Ovary (tissue), 10 donors: ENCODE measurements at regions of chr4 and their contacts with region 1.

Region 1: DNA sequence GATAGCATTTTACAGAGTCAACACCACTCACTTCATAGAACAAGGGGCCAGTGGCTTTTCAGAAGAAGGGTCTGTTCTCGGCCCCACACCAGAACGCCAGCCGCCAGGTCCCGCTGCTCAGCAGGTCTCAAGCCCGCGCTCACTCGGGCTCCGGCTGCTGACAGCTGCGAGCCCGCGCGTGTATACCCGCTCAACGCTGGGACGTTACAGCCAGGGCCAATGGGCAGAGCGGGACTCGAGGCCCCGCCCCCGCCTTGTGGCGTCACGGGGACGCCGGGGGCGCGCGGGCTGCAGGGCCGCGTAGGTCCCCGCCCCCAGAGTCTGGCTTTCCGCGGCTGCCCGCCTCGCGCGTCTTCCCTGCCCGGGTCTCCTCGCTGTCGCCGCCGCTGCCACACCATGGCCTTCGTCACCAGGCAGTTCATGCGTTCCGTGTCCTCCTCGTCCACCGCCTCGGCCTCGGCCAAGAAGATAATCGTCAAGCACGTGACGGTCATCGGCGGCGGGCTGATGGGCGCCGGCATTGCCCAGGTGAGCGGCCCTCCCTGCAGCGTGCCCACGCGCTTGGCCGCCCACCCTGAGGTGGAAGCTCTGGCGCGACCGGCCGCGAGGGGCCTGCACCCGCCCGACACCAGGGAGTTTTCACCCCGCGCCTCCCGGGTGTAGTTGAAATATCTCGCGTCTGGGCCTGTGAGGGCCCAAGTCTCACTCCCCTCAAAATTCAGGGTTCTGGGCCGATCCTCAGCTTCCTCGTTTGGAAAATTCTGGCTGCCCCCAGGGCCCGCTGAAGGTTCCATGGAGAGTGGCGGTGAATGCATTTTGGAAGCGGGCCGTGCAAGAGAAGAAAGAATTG is at the start of gene HADH:
- DNase-seq: peak; percentile 88 to 95 (median 93)
- H3K4me3 ChIP-seq: peak within 1 kb of the TSS; percentile 96
- H3K27ac ChIP-seq: peak within 1 kb of the TSS; percentile 88 to 97
- H3K4me1 ChIP-seq: peaks cover 12% of the 10 kb centered on the region
- H3K27me3 ChIP-seq: no peaks in the 10 kb centered on the region
- CTCF ChIP-seq: peak in 1 of 3 donors; percentile 11
- EP300 ChIP-seq: no peak
- POLR2A ChIP-seq: peak; percentile 78
- total RNA-seq, gene HADH: 45.4 to 66.1 (median 61.2) TPM

Region 2: GRCh38 chr4:107930821-107931774 is 58.7 kb before region 1 on chr4 and contains the start of gene CYP2U1:
- intact Hi-C with region 1: loop called in 2 of 4 experiments (anchors 5 kb)
- DNase-seq: peak; percentile 81 to 86 (median 84)
- H3K4me3 ChIP-seq: peak within 1 kb of the TSS; percentile 82
- H3K27ac ChIP-seq: peak within 1 kb of the TSS; percentile 65 to 71
- H3K4me1 ChIP-seq: peaks cover 6% of the 10 kb centered on the region
- H3K27me3 ChIP-seq: no peaks in the 10 kb centered on the region
- CTCF ChIP-seq: peak in 2 of 3 donors; percentile 24 to 33
- EP300 ChIP-seq: no peak
- POLR2A ChIP-seq: peak; percentile 43
- total RNA-seq, gene CYP2U1: 7.2 to 15.6 (median 11.9) TPM